ENCODE measurements at regions of chr16 and their contacts with region 1.

Region 1: GRCh38 chr16:73888840-73889490 is 407.6 kb upstream of the PSMD7 start:
- DNase-seq: peak in 3 of 5 donors; percentile 16 to 35 (median 28)
- ATAC-seq: peak; percentile 79 to 96 (median 88)
- H3K4me3 ChIP-seq: peak overlapping the region in 4 of 12 donors; percentile 9 to 40 (median 18)
- H3K27ac ChIP-seq: peak overlapping the region in 4 of 12 donors; percentile 11 to 50 (median 38)
- H3K4me1 ChIP-seq: peaks cover 0 to 13% (median 0%) of the 10 kb centered on the region in 12 donors
- H3K27me3 ChIP-seq: peaks cover 0 to 34% (median 16%) of the 10 kb centered on the region in 9 donors
- CTCF ChIP-seq: no peak
- POLR2A ChIP-seq: no peak

Region 2: DNA sequence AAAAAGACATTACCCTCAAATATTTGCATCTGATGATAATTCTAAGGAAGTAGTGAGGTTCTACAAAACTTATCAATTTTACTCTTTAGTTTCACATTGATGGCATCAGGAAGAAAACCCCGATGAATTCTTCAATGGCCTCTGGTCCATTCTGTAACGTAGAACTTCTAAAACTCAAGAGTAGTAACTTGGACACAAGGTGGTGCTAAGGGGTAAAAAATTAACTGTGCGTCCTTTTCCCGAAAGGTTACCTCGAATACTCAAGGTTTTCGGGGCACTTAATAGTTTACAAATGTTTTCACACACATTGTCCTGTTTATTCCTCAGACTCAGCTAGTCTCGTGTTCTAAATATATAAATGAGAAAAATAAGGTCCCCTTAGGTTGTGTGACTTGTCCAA is 323.7 kb before region 1 on chr16:
- intact Hi-C with region 1: loop called in 2 of 10 experiments (anchors 5 to 10 kb)
- DNase-seq: no peak
- ATAC-seq: no peak
- H3K4me3 ChIP-seq: no peak overlapping the region
- H3K27ac ChIP-seq: no peak overlapping the region
- H3K4me1 ChIP-seq: no peaks in the 10 kb centered on the region
- H3K27me3 ChIP-seq: peaks cover 0 to 10% (median 5%) of the 10 kb centered on the region in 9 donors
- CTCF ChIP-seq: peak in 7 of 12 donors; percentile 14 to 45 (median 39)
- POLR2A ChIP-seq: no peak

Region 3: GRCh38 chr16:73713778-73714495 is 175.0 kb before region 1 on chr16:
- intact Hi-C with region 1: loop called in 2 of 10 experiments (anchors 10 kb)
- DNase-seq: no peak
- ATAC-seq: no peak
- H3K4me3 ChIP-seq: no peak overlapping the region
- H3K27ac ChIP-seq: no peak overlapping the region
- H3K4me1 ChIP-seq: no peaks in the 10 kb centered on the region
- H3K27me3 ChIP-seq: no peaks in the 10 kb centered on the region
- CTCF ChIP-seq: peak in 11 of 12 donors; percentile 14 to 50 (median 37)
- POLR2A ChIP-seq: no peak

Region 4: GRCh38 chr16:73956587-73957494 is 67.9 kb after region 1 on chr16:
- intact Hi-C with region 1: loop called in 1 of 10 experiments (anchors 10 kb)
- DNase-seq: peak in 4 of 5 donors; percentile 34 to 48 (median 46)
- ATAC-seq: peak in 1 of 4 donors; percentile 66
- H3K4me3 ChIP-seq: no peak overlapping the region
- H3K27ac ChIP-seq: no peak overlapping the region
- H3K4me1 ChIP-seq: peaks cover 0 to 5% (median 0%) of the 10 kb centered on the region in 12 donors
- H3K27me3 ChIP-seq: peaks cover 0 to 5% (median 0%) of the 10 kb centered on the region in 9 donors
- CTCF ChIP-seq: peak; percentile 73 to 89 (median 81)
- POLR2A ChIP-seq: no peak

Region 5: GRCh38 chr16:74053826-74054225 is 164.9 kb after region 1 on chr16:
- intact Hi-C with region 1: no loop called
- DNase-seq: no peak
- ATAC-seq: no peak
- H3K4me3 ChIP-seq: no peak overlapping the region
- H3K27ac ChIP-seq: no peak overlapping the region
- H3K4me1 ChIP-seq: peaks cover 0 to 5% (median 0%) of the 10 kb centered on the region in 12 donors
- H3K27me3 ChIP-seq: peaks cover 0 to 2% (median 0%) of the 10 kb centered on the region in 9 donors
- CTCF ChIP-seq: no peak
- POLR2A ChIP-seq: no peak

Region 6: GRCh38 chr16:74635303-74635702 is 746.3 kb after region 1 on chr16:
- intact Hi-C with region 1: no loop called
- DNase-seq: no peak
- ATAC-seq: no peak
- H3K4me3 ChIP-seq: no peak overlapping the region
- H3K27ac ChIP-seq: no peak overlapping the region
- H3K4me1 ChIP-seq: no peaks in the 10 kb centered on the region
- H3K27me3 ChIP-seq: no peaks in the 10 kb centered on the region
- CTCF ChIP-seq: no peak
- POLR2A ChIP-seq: no peak